Posterior vena cava (tissue), 2 donors: ENCODE measurements at regions of chr12 and their contacts with region 1.

Region 1: DNA sequence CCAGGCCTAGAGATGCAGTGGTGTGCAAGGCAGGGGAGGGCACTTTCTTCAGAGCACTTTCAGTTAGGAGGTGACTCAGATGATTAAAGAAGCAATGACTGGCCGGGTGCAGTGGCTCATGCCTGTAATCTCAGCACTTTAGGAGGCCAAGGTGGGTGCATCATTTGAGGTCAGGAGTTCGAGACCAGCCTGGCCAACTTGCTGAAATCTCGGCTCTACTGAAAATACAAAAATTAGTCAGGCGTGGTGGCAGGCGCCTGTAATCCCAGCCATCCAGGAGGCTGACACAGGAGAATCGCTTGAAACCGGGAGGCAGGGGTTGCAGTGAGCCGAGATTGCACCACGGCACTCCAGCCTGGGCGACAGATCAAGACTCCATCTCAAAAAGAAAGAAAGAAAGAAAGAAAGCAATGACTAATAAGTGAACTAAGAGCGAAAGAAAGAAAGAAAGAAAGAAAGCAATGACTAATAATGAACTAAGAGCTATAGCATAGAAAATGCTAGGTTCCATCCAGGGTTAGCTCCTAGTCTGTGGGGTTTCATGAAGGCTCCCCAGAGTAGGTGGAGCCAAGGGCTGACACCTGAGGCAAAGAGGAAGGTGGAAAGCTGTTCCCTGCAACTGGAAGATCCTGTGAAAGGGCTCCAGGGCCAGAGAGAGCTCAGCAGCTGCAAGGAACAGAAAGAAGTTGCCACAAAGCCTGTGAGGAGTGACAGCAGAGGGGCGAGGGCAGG is 334.5 kb downstream of the CACNA1C start:
- DNase-seq: peak; percentile 56

Region 2: GRCh38 chr12:1984759-1985158 is 402.5 kb before region 1 on chr12:
- intact Hi-C with region 1: loop called in 1 of 2 experiments (anchors 5 kb)
- DNase-seq: no peak

Region 3: GRCh38 chr12:2336409-2336829 is 50.9 kb before region 1 on chr12:
- intact Hi-C with region 1: no loop called
- DNase-seq: no peak

Region 4: GRCh38 chr12:2354151-2354991 is 32.9 kb before region 1 on chr12:
- intact Hi-C with region 1: loop called in 1 of 2 experiments (anchors 5 kb)
- DNase-seq: no peak